ENCODE measurements at regions of chr3 and their contacts with region 1.

Region 1: DNA sequence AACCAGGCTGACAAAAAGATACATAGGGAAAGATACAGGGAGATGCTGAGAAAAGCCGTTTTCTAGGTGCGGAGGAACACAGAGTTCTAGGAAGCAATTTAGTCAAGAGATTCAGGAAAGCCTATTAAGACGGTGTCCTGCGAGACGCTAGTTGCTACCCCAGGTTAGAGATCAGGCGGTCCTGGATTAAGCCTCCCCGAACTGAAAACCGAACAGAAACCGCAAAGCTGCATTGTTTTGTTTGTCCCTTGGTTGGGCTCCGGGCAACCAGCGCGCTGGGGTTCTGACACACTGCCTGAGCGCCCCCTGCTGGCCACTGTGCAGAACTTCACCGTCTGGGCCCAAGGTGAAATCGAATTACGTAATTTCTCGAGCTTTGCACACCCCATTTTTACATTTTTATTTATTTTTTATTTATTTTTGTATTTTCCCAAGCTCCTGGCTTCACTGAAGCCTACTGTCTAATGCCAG is 37.3 kb upstream of the NDUFB4 start:
- DNase-seq: peak; percentile 75 to 92 (median 84)
- H3K4me3 ChIP-seq: peak overlapping the region in 58 of 59 donors; percentile 28 to 79 (median 62)
- H3K27ac ChIP-seq: peak overlapping the region in 58 of 59 donors; percentile 68 to 99 (median 91)
- H3K27me3 ChIP-seq: no peaks in the 10 kb centered on the region
- CTCF ChIP-seq: peak; percentile 93 to 100 (median 99)

Region 2: GRCh38 chr3:119891944-119892721 is 666.7 kb before region 1 on chr3:
- intact Hi-C with region 1: loop called in 1 of 2 experiments (anchors 2 kb)
- DNase-seq: peak in 1 of 10 donors; percentile 16
- H3K4me3 ChIP-seq: peak overlapping the region in 19 of 59 donors; percentile 6 to 47 (median 25)
- H3K27ac ChIP-seq: no peak overlapping the region
- H3K27me3 ChIP-seq: no peaks in the 10 kb centered on the region
- CTCF ChIP-seq: peak; percentile 28 to 94 (median 75)

Region 3: DNA sequence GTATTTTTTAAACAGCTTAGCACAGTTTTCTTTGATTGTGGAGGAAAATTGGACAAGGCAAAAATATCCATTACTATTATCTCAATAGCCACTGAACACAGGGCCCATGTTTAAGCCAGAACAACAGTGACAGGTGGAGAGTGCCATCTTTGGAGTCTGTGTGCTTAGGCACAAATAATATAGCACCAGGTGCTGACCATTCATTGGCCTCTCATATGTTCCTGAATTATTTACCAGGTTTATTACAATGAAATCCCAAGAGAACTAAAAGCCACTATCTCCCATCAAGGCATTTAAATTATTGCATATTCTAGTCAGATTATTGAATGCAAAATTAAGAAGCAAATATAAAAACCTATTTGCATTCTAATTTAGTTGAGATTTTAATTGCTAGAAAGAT is 313.4 kb before region 1 on chr3:
- intact Hi-C with region 1: loop called (anchors 1 to 2 kb)
- DNase-seq: no peak
- H3K4me3 ChIP-seq: no peak overlapping the region
- H3K27ac ChIP-seq: no peak overlapping the region
- H3K27me3 ChIP-seq: no peaks in the 10 kb centered on the region
- CTCF ChIP-seq: no peak

Region 4: DNA sequence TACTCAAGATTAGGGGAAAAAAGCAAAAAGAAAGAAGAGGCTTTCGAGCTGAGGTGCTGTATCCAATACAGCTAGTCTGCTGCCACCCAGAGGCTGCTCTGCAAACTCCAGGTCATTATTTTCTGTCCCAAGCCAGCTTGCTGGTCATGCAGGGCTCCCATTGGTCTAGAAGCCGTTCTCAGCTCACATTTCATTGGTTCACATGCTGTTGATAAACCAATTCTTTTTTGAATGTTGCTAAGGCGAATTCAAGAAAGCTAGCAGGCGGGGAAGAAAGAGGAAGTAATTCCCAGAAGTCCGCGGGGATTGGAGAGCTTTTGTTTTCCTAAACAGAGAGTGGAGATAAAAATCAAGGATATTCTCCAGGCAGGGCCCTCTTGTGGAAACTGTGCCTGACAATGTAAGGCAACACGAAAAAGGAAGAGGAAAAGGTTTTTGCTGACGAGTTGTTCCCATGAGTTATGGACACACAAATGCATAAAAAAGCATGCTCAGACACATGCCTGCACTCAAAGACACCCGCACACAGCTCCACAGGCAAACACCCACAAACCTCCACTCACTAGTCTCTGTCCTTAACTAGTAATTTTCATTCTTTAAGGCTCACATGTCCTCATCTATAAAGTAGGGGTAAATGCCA is 141.4 kb before region 1 on chr3:
- intact Hi-C with region 1: loop called (anchors 1 to 2 kb)
- DNase-seq: peak; percentile 77 to 98 (median 93)
- H3K4me3 ChIP-seq: peak overlapping the region; percentile 12 to 63 (median 46)
- H3K27ac ChIP-seq: peak overlapping the region in 57 of 59 donors; percentile 0 to 94 (median 84)
- H3K27me3 ChIP-seq: no peaks in the 10 kb centered on the region
- CTCF ChIP-seq: peak; percentile 86 to 99 (median 95)

Region 5: DNA sequence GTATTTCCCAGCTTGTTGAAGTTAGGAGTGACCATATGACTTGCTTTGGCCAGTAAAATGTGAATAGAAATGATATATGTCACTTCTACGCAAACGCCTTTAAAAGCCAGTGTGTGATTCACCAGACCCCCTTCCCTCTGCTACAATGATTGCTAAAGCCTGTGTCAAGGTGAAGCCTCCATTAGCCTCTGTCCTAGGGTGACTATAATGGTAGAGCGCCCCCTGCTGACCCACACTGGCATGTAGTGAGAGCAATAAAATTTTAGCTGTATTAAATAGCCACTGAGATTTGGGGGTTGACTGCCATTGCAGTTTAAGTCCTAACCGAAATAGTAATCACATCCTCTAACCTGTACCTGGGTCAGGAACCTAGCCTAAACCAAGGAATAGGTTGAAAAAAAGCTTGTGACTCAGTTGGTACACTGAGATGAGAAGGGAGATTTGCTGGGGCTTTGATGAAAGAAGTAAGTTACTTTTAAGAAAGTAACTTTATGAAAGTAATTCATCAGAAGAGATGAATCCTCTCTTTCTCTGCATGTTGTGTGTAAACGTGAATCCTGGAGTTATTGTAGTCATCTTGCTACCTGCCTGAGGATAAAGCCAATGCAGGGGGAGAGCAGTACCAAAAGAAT is 236.3 kb after region 1 on chr3:
- intact Hi-C with region 1: loop called (anchors 1 to 2 kb)
- DNase-seq: peak; percentile 51 to 86 (median 69)
- H3K4me3 ChIP-seq: no peak overlapping the region
- H3K27ac ChIP-seq: no peak overlapping the region
- H3K27me3 ChIP-seq: no peaks in the 10 kb centered on the region
- CTCF ChIP-seq: peak; percentile 51 to 87 (median 77)

Measured in dorsolateral prefrontal cortex (tissue), 120 donors.